B cell (primary cell): ENCODE measurements at regions of chr2 and their contacts with region 1.

Region 1: GRCh38 chr2:18560031-18560796 is at the start of gene RDH14:
- DNase-seq: peak; percentile 94
- ATAC-seq: peak; percentile 90
- H3K4me3 ChIP-seq: peak within 1 kb of the TSS; percentile 34 to 79 (median 69)
- H3K4me3 Mint-ChIP-seq: peak within 1 kb of the TSS; percentile 93
- H3K27ac ChIP-seq: peak within 1 kb of the TSS; percentile 71 to 93
- H3K27ac Mint-ChIP-seq: peak within 1 kb of the TSS; percentile 94
- H3K4me1 ChIP-seq: peaks cover 12 to 13% of the 10 kb centered on the region in 2 donors
- H3K4me1 Mint-ChIP-seq: peaks cover 39% of the 10 kb centered on the region
- H3K27me3 ChIP-seq: no peaks in the 10 kb centered on the region
- H3K27me3 Mint-ChIP-seq: no peaks in the 10 kb centered on the region
- CTCF ChIP-seq: no peak
- total RNA-seq, gene RDH14: 18.5 and 19.4 TPM in 2 replicates

Region 2: DNA sequence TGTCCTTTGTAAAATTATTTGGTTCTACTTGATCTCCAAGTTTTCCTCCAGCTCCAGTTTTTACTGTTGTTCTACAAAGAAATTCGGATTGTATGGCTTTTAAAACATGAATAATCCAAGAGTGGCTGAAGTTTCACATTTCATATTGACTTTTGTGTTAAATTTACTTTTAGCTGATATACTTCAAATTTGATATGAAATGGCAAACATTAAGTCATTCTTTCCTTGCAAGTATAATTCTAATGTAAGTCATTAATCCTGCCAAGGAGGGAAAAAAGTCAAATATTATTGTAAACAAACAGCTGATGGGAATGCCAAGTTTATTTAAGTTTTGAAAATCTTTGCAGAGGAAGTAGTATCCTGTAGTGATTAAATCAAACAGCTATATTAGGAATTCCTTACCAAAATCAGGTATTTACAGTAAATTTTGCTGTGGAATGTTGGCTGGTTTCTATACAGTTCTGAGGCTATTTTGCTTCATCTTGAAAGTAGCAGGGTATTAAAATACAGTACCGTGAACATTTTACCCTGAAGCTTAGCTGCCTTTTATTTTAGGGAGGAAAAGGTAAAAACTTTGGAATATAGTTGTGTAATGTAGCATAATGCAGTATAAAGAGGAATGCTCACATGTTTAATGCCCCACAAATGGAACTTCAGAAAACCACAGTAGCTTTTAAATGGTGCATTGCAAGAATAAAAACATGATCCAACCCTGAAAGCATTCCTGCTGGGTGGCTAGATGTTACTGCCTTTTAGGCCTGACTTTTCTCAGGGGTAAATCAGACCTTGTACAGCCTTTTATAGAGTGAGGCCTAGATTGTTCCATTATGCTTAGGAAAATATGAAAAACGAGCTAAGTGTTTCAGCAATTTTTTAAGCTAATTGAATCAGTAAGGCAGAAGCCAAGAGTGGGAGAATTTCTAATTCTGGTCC is 91.9 kb after region 1 on chr2:
- CTCF ChIA-PET with region 1: no interaction called
- POLR2A ChIA-PET with region 1: no interaction called
- intact Hi-C with region 1: no loop called
- DNase-seq: no peak
- ATAC-seq: no peak
- H3K4me3 ChIP-seq: no peak overlapping the region
- H3K4me3 Mint-ChIP-seq: no peak overlapping the region
- H3K27ac ChIP-seq: no peak overlapping the region
- H3K27ac Mint-ChIP-seq: no peak overlapping the region
- H3K4me1 ChIP-seq: no peaks in the 10 kb centered on the region
- H3K4me1 Mint-ChIP-seq: no peaks in the 10 kb centered on the region
- H3K27me3 ChIP-seq: no peaks in the 10 kb centered on the region
- H3K27me3 Mint-ChIP-seq: no peaks in the 10 kb centered on the region
- CTCF ChIP-seq: no peak

Region 3: DNA sequence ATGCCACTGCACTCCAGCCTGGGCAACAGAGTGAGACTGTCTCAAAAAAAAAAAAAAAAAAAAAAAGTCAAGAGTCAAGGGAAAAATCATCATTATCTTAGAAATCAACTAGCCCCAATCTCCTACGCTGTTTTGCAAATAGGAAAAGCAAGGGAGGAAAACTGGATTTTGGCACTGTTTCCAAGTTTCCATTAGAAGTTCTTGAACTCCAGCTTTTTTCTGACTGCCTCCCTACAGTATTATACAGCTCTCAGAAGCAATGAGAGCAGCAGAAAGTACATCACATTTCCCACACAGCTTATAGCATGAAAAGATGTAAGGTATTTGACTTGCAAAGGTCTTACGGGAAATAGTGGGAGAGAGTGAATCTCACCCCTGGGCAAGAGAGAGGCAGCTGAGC is 670.4 kb after region 1 on chr2:
- CTCF ChIA-PET with region 1: no interaction called
- POLR2A ChIA-PET with region 1: interaction called, 10 read pairs
- intact Hi-C with region 1: no loop called
- DNase-seq: no peak
- ATAC-seq: no peak
- H3K4me3 ChIP-seq: no peak overlapping the region
- H3K4me3 Mint-ChIP-seq: no peak overlapping the region
- H3K27ac ChIP-seq: no peak overlapping the region
- H3K27ac Mint-ChIP-seq: no peak overlapping the region
- H3K4me1 ChIP-seq: no peaks in the 10 kb centered on the region
- H3K4me1 Mint-ChIP-seq: no peaks in the 10 kb centered on the region
- H3K27me3 ChIP-seq: no peaks in the 10 kb centered on the region
- H3K27me3 Mint-ChIP-seq: peaks cover 3% of the 10 kb centered on the region
- CTCF ChIP-seq: no peak

Region 4: DNA sequence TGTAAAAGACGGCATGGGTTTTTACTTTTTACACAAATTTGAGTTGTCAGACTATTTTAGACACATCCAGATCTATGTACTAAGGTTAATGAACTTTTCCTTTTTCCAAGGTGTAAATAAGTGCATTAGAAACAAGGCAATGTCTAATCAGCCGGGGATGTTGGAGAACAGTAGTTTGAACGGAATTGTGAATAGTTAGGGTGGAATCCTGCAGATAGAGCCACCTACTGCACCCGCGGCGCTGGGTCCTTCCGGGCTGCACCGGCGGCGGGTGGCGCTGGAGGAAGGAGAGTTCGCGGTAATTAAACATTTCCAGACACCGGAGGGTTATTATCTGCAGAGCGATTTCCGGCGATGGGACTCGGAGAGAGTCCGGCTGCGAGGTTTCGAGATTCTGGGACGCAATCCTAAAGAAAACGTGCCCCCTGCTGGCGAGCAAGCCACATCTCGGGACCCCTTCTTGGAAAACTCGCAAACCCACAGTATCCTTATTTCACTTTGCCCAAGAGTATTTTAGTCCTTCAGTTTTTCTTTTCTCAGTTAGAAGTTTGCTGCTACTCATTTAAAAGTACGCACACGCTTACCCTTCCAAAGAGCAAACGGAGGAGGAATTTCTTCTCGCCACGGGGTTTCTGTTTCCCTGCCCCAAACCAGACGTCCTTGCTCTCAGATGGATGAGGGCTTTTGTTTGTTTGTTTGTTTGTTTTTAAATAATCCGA is 802.7 kb after region 1 on chr2:
- CTCF ChIA-PET with region 1: interaction called, 3 read pairs
- POLR2A ChIA-PET with region 1: no interaction called
- intact Hi-C with region 1: loop called (anchors 5 kb)
- DNase-seq: peak; percentile 62
- ATAC-seq: peak; percentile 31
- H3K4me3 ChIP-seq: peak overlapping the region; percentile 56 to 99 (median 71)
- H3K4me3 Mint-ChIP-seq: peak overlapping the region; percentile 99
- H3K27ac ChIP-seq: no peak overlapping the region
- H3K27ac Mint-ChIP-seq: peak overlapping the region; percentile 67
- H3K4me1 ChIP-seq: peaks cover 42 to 45% of the 10 kb centered on the region in 2 donors
- H3K4me1 Mint-ChIP-seq: peaks cover 38% of the 10 kb centered on the region
- H3K27me3 ChIP-seq: peaks cover 0 to 46% (median 32%) of the 10 kb centered on the region in 4 experiments
- H3K27me3 Mint-ChIP-seq: peaks cover 32% of the 10 kb centered on the region
- CTCF ChIP-seq: peak; percentile 63

Region 5: GRCh38 chr2:19989681-19990415 is 1429.6 kb after region 1 on chr2 and contains the start of gene WDR35:
- CTCF ChIA-PET with region 1: no interaction called
- POLR2A ChIA-PET with region 1: no interaction called
- intact Hi-C with region 1: loop called (anchors 1 kb)
- DNase-seq: peak; percentile 92
- ATAC-seq: peak; percentile 88
- H3K4me3 ChIP-seq: peak within 1 kb of the TSS; percentile 68 to 93 (median 88)
- H3K4me3 Mint-ChIP-seq: peak within 1 kb of the TSS; percentile 91
- H3K27ac ChIP-seq: peak within 1 kb of the TSS; percentile 69 to 77
- H3K27ac Mint-ChIP-seq: peak within 1 kb of the TSS; percentile 89
- H3K4me1 ChIP-seq: peaks cover 16 to 22% of the 10 kb centered on the region in 2 donors
- H3K4me1 Mint-ChIP-seq: peaks cover 28% of the 10 kb centered on the region
- H3K27me3 ChIP-seq: peaks cover 0 to 7% (median 2%) of the 10 kb centered on the region in 4 experiments
- H3K27me3 Mint-ChIP-seq: peaks cover 21% of the 10 kb centered on the region
- CTCF ChIP-seq: no peak
- total RNA-seq, gene WDR35: 9.4 and 11.8 TPM in 2 replicates